Mammary epithelial cell (primary cell): ENCODE measurements at regions of chr22 and their contacts with region 1.

Region 1: DNA sequence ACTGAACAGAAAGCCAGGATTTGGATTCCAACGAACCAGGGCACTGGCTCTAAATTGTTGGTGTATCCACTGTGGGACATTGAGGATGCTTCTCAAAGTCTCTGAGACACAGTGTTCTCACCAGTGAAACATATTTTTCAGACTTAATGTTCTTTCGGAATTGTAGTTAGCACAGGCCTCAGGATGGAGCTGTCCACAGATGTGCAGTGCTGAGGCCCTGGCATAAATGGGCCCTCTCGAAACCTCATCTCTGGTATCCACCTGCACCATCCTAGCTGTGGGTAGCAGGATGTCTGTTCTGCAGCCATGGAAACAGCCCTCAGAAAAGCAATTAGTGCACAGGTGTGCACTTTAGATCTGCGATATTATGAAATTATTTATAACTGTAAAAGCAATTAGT is 656.8 kb downstream of the TBC1D22A start:
- DNase-seq: no peak
- H3K4me3 ChIP-seq: no peak overlapping the region
- H3K27ac ChIP-seq: no peak overlapping the region
- H3K4me1 ChIP-seq: no peaks in the 10 kb centered on the region
- H3K27me3 ChIP-seq: no peaks in the 10 kb centered on the region
- CTCF ChIP-seq: no peak

Region 2: DNA sequence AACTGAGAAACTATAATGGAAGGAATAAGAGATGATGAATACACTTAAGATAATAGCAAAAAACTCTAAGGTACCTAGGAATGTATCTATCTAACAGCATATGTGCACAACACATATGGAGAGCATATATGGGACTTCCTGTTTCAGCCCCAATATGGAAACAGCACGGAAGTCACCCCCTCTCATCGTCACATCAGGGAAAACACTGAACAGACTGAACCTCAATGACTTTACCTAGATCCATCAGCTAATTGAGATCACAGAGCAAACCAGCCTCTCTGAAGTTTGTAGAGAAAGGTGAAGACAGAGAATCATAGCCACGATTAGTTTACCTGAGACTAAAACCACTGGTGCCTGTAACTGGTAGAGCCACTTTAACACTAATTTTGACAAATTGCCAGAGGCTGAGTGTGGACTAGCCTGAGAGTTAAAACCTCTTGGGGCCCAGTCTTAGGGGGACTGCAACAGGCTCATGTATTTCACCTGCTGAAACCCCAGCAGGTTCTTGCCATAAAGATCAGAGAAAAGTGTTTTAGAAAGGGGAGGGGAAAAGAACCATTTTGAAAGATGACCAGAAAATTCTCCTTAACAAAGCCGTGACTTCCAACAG is 65.8 kb after region 1 on chr22:
- CTCF ChIA-PET with region 1: no interaction called
- dilution Hi-C with region 1: loop called (anchors 10 kb)
- in situ Hi-C with region 1: no loop called
- intact Hi-C with region 1: no loop called
- DNase-seq: no peak
- H3K4me3 ChIP-seq: no peak overlapping the region
- H3K27ac ChIP-seq: no peak overlapping the region
- H3K4me1 ChIP-seq: no peaks in the 10 kb centered on the region
- H3K27me3 ChIP-seq: no peaks in the 10 kb centered on the region
- CTCF ChIP-seq: no peak